K562 (cell line): ENCODE measurements at regions of chr20 and their contacts with region 1.

Region 1: DNA sequence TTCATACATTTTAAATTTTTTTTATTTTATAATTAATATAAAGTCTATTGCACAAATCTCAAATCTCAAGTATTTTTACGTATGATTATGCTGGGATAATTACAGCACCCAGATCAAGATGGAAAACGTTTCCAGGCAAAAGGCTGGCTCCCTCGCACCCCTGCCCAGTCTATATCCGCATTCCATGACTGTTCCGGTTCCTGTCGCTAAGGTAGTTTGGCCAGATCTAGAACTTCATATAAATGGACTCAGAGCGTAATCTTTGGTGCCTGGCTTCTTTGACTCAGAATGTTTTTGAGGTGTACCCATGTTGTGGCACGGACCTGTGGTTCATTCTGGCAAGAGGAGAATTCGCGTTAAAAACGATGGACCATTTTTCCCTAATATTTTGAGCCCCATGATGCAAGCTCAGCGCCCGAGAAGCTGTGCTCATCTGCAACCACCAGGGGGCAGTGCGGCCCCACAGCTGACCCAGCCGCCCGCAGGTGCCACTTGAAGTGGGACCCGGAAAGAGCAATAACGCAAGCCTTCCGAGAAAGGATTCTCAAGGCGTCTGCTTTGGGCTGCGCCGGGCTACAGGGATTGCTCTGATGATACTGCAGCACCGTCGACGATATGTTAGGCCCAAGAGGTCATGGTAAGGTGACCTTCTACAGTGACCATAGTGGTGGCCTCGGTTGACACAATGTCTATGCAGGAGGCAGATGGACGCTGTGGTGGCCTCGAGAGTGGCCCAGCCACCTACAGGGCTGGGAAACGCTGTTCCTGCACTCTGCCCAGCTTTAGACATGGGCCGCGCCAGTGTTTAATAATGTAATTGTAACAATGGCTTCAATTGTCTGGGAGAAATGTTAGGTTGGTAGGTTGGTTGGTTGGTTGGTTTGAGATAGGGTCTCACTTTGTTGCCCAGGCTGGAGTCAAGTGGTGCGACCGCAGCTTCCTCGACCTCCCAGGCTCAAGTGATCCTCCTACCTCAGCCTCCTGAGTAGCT is 160.1 kb downstream of the ZMYND8 start:
- DNase-seq: peak; percentile 83 to 87 (median 84)
- ATAC-seq: peak; percentile 90
- H3K4me3 ChIP-seq: no peak overlapping the region
- H3K27ac ChIP-seq: no peak overlapping the region
- H3K4me1 ChIP-seq: peaks cover 8 to 17% of the 10 kb centered on the region in 2 experiments
- H3K27me3 ChIP-seq: peaks cover 0 to 5% of the 10 kb centered on the region in 2 experiments; a peak in 2 of 5 replicates
- CTCF ChIP-seq: peak; percentile 93 to 98 (median 95)
- EP300 ChIP-seq: no peak
- POLR2A ChIP-seq: no peak
- RAD21 ChIP-seq: peak; percentile 90 to 97

Region 2: GRCh38 chr20:47272893-47273590 is 76.7 kb after region 1 on chr20:
- CTCF ChIA-PET with region 1: no interaction called
- POLR2A ChIA-PET with region 1: no interaction called
- in situ Hi-C with region 1: no loop called
- intact Hi-C with region 1: loop called (anchors 5 kb)
- DNase-seq: peak; percentile 54 to 73 (median 64)
- ATAC-seq: peak; percentile 74
- H3K4me3 ChIP-seq: no peak overlapping the region
- H3K27ac ChIP-seq: no peak overlapping the region
- H3K4me1 ChIP-seq: peaks cover 5 to 7% of the 10 kb centered on the region in 2 experiments; a peak in 3 of 5 replicates
- H3K27me3 ChIP-seq: no peaks in the 10 kb centered on the region
- CTCF ChIP-seq: peak; percentile 74 to 82 (median 79)
- EP300 ChIP-seq: no peak
- POLR2A ChIP-seq: no peak
- RAD21 ChIP-seq: peak; percentile 80 to 83

Region 3: GRCh38 chr20:47392015-47392720 is 195.8 kb after region 1 on chr20:
- CTCF ChIA-PET with region 1: no interaction called
- POLR2A ChIA-PET with region 1: no interaction called
- in situ Hi-C with region 1: loop called (anchors 5 kb)
- intact Hi-C with region 1: no loop called
- DNase-seq: peak; percentile 71 to 92 (median 80)
- ATAC-seq: peak; percentile 98
- H3K4me3 ChIP-seq: no peak overlapping the region
- H3K27ac ChIP-seq: peak overlapping the region; percentile 95
- H3K4me1 ChIP-seq: peaks cover 8 to 24% of the 10 kb centered on the region in 2 experiments; a peak in 4 of 5 replicates
- H3K27me3 ChIP-seq: no peaks in the 10 kb centered on the region
- CTCF ChIP-seq: no peak
- EP300 ChIP-seq: peak; percentile 71; the same call in 1 of the 2 replicates
- POLR2A ChIP-seq: peak; percentile 69; the same call in 1 of the 2 replicates
- RAD21 ChIP-seq: no peak